Activated B cell treated with CpG ODN at 0.5 μM for 24 hours (primary cell): ENCODE measurements at regions of chr22 and their contacts with region 1.

Region 1: GRCh38 chr22:39532215-39533071 is at the start of gene RPS19BP1:
- DNase-seq: peak; percentile 94
- ATAC-seq: peak; percentile 85
- H3K4me3 Mint-ChIP-seq: peak within 1 kb of the TSS; percentile 96
- H3K27ac Mint-ChIP-seq: peak within 1 kb of the TSS; percentile 94
- H3K4me1 Mint-ChIP-seq: peaks cover 56% of the 10 kb centered on the region
- H3K27me3 Mint-ChIP-seq: no peaks in the 10 kb centered on the region
- CTCF ChIP-seq: no peak
- total RNA-seq, gene RPS19BP1: 67.7 and 79.0 TPM in 2 replicates

Region 2: DNA sequence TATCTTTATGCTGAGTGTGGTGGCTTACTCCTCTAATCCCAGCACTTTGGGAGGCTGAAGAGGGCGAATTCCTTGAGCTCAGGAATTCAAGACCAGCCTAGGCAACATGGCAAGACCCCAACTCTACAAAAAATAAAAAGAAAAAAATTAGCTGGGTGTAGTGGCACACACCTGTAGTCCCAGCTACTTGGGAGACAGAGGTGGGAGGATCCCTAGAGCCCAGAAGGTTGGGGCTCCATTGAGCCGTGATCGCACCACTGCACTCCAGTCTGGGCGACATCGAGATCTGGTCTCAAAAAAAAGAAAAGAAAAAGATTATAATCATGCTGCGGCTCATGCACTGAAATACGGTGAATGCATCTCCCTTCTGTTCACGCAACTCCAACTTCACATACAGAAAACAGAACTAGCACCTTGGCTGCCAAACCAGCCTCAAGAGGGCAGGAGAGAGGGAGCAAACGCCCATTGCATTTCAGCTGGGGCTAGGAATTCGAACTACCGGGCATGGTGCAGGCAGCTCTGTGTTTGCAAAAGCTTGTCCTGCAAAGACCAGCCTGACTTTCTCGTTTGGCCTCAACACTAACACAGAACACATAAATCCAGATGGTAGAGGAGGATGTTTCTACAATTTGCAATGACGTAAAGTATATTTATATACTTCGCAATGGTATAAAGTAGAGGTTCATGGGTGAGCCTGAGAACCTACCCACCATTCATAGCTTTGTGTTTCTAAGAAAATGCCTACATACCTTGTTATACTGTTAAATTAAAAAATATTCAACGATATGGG is 189.0 kb before region 1 on chr22:
- CTCF ChIA-PET with region 1: interaction called, 23 read pairs
- POLR2A ChIA-PET with region 1: interaction called, 8 read pairs
- intact Hi-C with region 1: loop called (anchors 1 kb)
- DNase-seq: peak; percentile 48
- ATAC-seq: peak; percentile 97
- H3K4me3 Mint-ChIP-seq: no peak overlapping the region
- H3K27ac Mint-ChIP-seq: no peak overlapping the region
- H3K4me1 Mint-ChIP-seq: peaks cover 5% of the 10 kb centered on the region
- H3K27me3 Mint-ChIP-seq: peaks cover 9% of the 10 kb centered on the region
- CTCF ChIP-seq: peak; percentile 33

Region 3: DNA sequence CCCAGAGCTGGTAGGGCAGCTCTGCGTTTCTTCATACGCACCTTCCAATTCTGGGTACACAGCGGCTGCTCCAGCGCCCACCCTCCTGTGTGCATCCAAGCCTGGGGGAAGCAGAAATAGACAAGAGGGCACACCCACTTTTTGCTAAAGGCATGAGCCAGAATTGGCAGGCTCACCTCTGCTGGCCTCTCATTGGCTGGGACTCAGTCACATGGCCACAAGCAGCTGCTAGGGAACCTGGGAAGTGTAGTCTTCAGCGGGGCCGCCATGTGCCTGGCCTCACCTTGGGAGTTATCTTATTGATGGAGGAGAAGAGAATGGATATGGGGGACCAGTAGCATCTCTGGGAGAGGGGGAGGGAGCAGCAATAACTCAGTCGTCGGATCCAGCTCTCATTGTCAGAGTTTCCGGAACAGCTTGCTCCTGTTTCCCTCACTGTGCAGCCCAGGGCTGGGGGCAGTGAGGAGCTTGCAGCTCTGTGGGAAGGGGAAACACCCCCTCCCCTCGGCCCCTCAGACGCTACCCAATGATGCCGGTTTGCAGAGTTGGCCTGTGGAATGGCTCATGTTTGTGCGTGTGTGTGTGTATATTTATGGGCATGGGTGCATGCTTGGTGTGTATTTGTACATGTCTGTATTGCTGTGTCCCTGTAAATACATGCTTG is 42.2 kb before region 1 on chr22:
- CTCF ChIA-PET with region 1: interaction called, 42 read pairs
- POLR2A ChIA-PET with region 1: interaction called, 4 read pairs
- intact Hi-C with region 1: loop called (anchors 1 kb)
- DNase-seq: peak; percentile 55
- ATAC-seq: peak; percentile 99
- H3K4me3 Mint-ChIP-seq: peak overlapping the region; percentile 17
- H3K27ac Mint-ChIP-seq: peak overlapping the region; percentile 13
- H3K4me1 Mint-ChIP-seq: peaks cover 23% of the 10 kb centered on the region
- H3K27me3 Mint-ChIP-seq: no peaks in the 10 kb centered on the region
- CTCF ChIP-seq: no peak

Region 4: GRCh38 chr22:39520054-39520891 is 12.2 kb before region 1 on chr22 and contains the start of gene ATF4:
- CTCF ChIA-PET with region 1: interaction called, 23 read pairs
- POLR2A ChIA-PET with region 1: interaction called, 111 read pairs
- intact Hi-C with region 1: loop called (anchors 1 kb)
- DNase-seq: peak; percentile 88
- ATAC-seq: peak; percentile 91
- H3K4me3 Mint-ChIP-seq: peak within 1 kb of the TSS; percentile 91
- H3K27ac Mint-ChIP-seq: peak within 1 kb of the TSS; percentile 98
- H3K4me1 Mint-ChIP-seq: peaks cover 58% of the 10 kb centered on the region
- H3K27me3 Mint-ChIP-seq: peaks cover 2% of the 10 kb centered on the region
- CTCF ChIP-seq: no peak
- total RNA-seq, gene ATF4: 363 and 368 TPM in 2 replicates

Region 5: GRCh38 chr22:40044102-40044869 is 511.8 kb after region 1 on chr22:
- CTCF ChIA-PET with region 1: interaction called, 9 read pairs
- POLR2A ChIA-PET with region 1: interaction called, 25 read pairs
- intact Hi-C with region 1: loop called (anchors 1 kb)
- DNase-seq: peak; percentile 94
- ATAC-seq: peak; percentile 85
- H3K4me3 Mint-ChIP-seq: peak overlapping the region; percentile 90
- H3K27ac Mint-ChIP-seq: peak overlapping the region; percentile 99
- H3K4me1 Mint-ChIP-seq: peaks cover 48% of the 10 kb centered on the region
- H3K27me3 Mint-ChIP-seq: peaks cover 12% of the 10 kb centered on the region
- CTCF ChIP-seq: no peak